HAP-1 (cell line): ENCODE measurements at regions of chr22 and their contacts with region 1.

Region 1: DNA sequence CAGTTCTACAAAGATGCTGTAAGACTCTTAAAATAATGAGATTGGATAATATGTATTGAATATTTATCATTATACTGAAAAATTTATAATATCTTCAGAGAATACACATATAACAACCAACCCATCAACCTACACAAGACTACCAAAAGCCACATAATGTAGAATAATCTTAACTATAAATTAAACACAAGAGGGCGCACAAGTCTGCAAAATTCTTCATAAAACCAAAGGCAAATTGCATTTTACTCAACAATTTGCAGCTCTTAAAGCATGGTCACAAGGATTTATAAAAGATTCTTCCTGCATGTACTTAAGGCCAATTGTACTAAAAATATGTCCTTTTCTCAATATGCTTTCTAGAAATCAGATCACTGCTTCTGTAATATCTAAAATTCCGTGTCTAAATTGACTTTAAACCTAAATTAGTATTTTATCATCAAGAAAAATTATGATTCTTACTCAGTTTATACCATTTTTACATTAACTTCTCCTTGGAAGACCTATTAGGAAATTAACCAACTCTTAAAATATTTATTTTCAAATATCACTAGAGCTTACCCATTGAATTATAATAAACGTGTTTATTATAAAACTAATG is 79.0 kb downstream of the TTC28 start:
- DNase-seq: peak in 1 of 2 experiments; percentile 65
- H3K4me3 ChIP-seq: no peak overlapping the region
- H3K4me1 ChIP-seq: no peaks in the 10 kb centered on the region
- H3K27me3 ChIP-seq: no peaks in the 10 kb centered on the region

Region 2: GRCh38 chr22:28268171-28268570 is 332.5 kb before region 1 on chr22:
- in situ Hi-C with region 1: no loop called
- DNase-seq: no peak
- H3K4me3 ChIP-seq: no peak overlapping the region
- H3K4me1 ChIP-seq: no peaks in the 10 kb centered on the region
- H3K27me3 ChIP-seq: no peaks in the 10 kb centered on the region

Region 3: GRCh38 chr22:28829358-28830181 is 228.9 kb after region 1 on chr22:
- in situ Hi-C with region 1: loop called (anchors 5 kb)
- DNase-seq: peak; percentile 61 to 84
- H3K4me3 ChIP-seq: no peak overlapping the region
- H3K4me1 ChIP-seq: no peaks in the 10 kb centered on the region
- H3K27me3 ChIP-seq: no peaks in the 10 kb centered on the region

Region 4: DNA sequence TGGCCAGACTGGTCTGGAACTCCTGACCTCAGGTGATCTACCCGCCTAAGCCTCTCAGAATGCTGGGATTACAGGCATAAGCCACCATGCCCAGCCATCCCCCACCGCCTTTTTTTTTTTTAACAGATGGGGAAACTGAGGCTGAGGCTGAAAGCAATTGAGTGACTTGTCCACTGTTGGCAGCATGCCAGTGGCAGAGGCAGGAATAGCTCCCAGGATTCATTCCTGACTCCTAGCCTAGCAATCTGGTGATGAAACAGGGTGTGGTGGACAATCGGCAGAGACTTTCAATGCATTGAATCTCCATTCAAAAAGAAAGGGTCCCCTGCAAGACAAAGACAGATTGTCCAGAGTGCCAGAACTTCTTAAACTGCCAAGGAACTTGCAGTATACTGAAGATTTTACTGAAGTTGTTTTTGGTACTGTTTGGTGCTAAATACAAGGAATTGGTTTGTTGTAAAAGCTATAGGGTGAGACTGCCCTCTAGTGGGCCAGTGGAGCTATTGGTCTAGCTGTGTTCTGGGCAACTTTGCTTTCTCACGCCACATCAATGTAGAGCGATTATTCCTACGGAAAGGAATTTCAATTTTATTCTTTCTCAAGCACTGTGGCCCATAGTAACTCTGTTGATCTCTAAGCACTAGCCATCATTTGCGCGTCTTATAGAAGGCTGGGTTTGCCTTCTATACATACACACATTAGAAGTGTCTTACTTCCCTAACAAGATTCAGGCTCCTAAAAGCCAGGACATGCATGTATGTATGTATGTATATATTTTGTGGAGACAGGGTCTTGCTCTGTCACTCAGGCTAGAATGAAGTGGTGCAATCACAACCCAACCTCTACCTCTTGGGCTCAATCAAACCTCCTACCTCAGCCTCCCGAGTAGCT is 440.0 kb after region 1 on chr22:
- in situ Hi-C with region 1: loop called (anchors 25 kb)
- DNase-seq: peak; percentile 80 to 85
- H3K4me3 ChIP-seq: no peak overlapping the region
- H3K4me1 ChIP-seq: peaks cover 4% of the 10 kb centered on the region; the same call in 1 of the 2 replicates
- H3K27me3 ChIP-seq: no peaks in the 10 kb centered on the region